AG04449 (cell line): ENCODE measurements at regions of chr2 and their contacts with region 1.

Region 1: DNA sequence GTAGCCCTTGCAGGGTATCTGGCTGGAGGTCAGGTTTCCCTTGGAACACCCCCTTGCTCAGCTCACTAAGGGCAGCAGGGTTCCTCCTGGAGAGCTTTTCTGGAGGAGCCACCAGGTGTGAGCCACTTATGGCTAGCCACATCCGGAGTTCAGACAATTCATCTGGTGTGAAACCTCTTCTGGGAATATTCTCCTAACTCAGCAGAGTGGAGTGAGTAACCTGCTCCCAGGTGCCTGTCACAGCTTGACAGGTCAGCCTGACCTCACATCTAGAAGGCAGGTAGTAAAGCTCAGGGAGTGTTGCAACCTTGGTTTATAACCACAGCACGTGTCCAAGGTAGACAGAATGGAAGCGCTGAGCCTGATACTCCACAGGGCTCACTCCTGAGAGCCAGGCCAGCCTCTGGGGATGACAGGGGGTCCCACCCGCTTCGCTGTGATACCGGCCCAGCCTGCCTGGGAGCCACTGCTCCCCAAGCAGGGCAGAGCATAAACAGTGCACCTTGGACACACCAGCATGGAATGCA is 62.6 kb upstream of the TGFA start:
- DNase-seq: no peak
- H3K4me3 ChIP-seq: no peak overlapping the region
- CTCF ChIP-seq: no peak

Region 2: DNA sequence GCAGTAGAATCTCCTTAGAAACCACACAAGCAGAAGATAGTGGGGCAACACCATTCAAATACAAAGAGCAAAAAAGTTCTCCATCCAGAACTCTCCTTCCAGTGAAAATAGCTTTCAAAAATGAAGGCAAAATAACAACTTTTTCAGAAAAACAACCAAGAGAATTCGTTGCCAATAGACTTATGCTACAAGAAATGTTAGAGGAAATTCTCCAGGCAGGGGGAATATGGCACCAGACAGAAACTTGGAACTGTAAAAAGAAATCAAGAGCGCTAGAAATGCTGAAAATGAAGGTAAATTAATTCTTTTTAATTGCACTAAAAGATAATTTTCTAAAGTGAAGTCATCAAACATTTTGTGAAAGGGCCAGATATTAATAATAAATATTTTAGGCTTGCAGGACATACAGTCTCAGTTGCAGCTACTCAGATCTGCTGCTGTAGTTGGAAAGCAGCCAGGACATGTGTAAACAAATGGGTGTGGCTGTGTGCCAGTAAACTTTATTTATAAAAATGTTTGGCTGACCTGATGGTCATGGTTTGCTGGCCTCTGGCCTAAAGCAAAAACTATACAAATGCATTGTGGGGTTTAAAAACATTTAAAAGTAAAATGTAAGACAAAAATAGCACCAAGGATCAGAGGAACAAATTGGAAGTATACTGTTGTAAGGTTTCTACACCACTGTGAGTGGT is 11.1 kb after region 1 on chr2:
- CTCF ChIA-PET with region 1: interaction called, 37 read pairs
- POLR2A ChIA-PET with region 1: no interaction called
- DNase-seq: no peak
- H3K4me3 ChIP-seq: no peak overlapping the region
- CTCF ChIP-seq: no peak

Region 3: GRCh38 chr2:70641263-70641784 is 25.1 kb after region 1 on chr2:
- CTCF ChIA-PET with region 1: interaction called, 13 read pairs
- POLR2A ChIA-PET with region 1: no interaction called
- DNase-seq: no peak
- H3K4me3 ChIP-seq: no peak overlapping the region
- CTCF ChIP-seq: no peak

Region 4: GRCh38 chr2:70664525-70664924 is 48.3 kb after region 1 on chr2:
- CTCF ChIA-PET with region 1: no interaction called
- POLR2A ChIA-PET with region 1: no interaction called
- DNase-seq: no peak
- H3K4me3 ChIP-seq: no peak overlapping the region
- CTCF ChIP-seq: no peak